ENCODE measurements at regions of chr5 and their contacts with region 1.

Region 1: GRCh38 chr5:173536312-173536641 is 80.2 kb downstream of the BOD1 start:
- DNase-seq: no peak
- ATAC-seq: no peak
- H3K4me3 ChIP-seq: no peak overlapping the region
- H3K27ac ChIP-seq: no peak overlapping the region
- H3K4me1 ChIP-seq: peaks cover 0 to 11% (median 0%) of the 10 kb centered on the region in 12 donors
- H3K27me3 ChIP-seq: peaks cover 0 to 2% (median 0%) of the 10 kb centered on the region in 9 donors
- CTCF ChIP-seq: no peak
- POLR2A ChIP-seq: no peak

Region 2: GRCh38 chr5:173355561-173355960 is 180.7 kb before region 1 on chr5:
- intact Hi-C with region 1: no loop called
- DNase-seq: no peak
- ATAC-seq: no peak
- H3K4me3 ChIP-seq: no peak overlapping the region
- H3K27ac ChIP-seq: no peak overlapping the region
- H3K4me1 ChIP-seq: no peaks in the 10 kb centered on the region
- H3K27me3 ChIP-seq: peaks cover 0 to 4% (median 0%) of the 10 kb centered on the region in 9 donors
- CTCF ChIP-seq: no peak
- POLR2A ChIP-seq: no peak

Region 3: DNA sequence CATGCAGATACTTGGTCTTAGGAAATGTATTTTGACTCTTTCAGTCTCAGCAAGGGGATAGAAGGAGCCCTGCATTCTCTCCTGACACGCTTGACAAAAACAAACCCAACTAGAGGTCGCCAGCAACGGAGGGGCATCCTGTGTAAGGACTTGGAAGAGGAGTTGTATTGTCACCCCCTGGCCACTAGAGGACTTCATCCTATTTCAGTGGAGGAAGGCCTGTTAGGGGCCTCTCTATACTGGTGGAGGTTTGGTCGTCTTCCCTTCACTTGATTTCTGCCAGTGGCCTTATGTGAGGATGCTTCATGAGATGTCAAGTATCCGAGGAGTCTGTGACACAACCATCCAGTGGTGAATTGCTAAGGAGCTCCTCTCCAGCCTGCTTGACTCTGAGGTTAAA is 85.2 kb before region 1 on chr5:
- intact Hi-C with region 1: loop called in 1 of 10 experiments (anchors 5 kb)
- DNase-seq: no peak
- ATAC-seq: no peak
- H3K4me3 ChIP-seq: no peak overlapping the region
- H3K27ac ChIP-seq: peak overlapping the region in 8 of 12 donors; percentile 34 to 79 (median 68)
- H3K4me1 ChIP-seq: peaks cover 0 to 36% (median 15%) of the 10 kb centered on the region in 12 donors
- H3K27me3 ChIP-seq: no peaks in the 10 kb centered on the region
- CTCF ChIP-seq: peak in 7 of 12 donors; percentile 13 to 45 (median 32)
- POLR2A ChIP-seq: no peak

Region 4: DNA sequence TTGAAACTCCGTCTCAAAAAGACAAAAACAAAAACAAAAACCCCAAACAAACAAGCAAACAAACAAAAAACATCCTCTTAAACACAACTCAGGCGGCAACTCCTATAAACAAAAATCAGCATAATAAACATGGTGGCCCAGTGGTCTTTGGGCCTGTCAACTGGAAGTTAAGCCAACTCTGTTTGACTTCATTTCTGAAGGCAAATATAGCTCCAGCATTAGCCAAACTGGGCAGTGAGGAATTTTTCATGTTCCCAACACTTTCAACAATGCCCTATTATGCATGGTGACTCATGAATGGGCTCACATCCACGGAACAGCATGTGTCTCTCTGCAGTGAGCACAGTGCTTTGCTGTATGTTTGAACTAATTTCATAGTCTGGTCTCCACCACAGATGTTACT is 64.1 kb before region 1 on chr5:
- intact Hi-C with region 1: no loop called
- DNase-seq: peak in 4 of 5 donors; percentile 56 to 77 (median 66)
- ATAC-seq: peak; percentile 90 to 96 (median 92)
- H3K4me3 ChIP-seq: no peak overlapping the region
- H3K27ac ChIP-seq: peak overlapping the region; percentile 54 to 83 (median 65)
- H3K4me1 ChIP-seq: peaks cover 0 to 20% (median 13%) of the 10 kb centered on the region in 12 donors
- H3K27me3 ChIP-seq: no peaks in the 10 kb centered on the region
- CTCF ChIP-seq: no peak
- POLR2A ChIP-seq: no peak

Measured in heart left ventricle (tissue), 16 donors.